ENCODE measurements at regions of chr9 and their contacts with region 1.

Region 1: GRCh38 chr9:15354713-15355112 is 47.7 kb upstream of the TTC39B start:
- DNase-seq: peak; percentile 24
- ATAC-seq: peak; percentile 48
- H3K4me3 Mint-ChIP-seq: no peak overlapping the region
- H3K27ac Mint-ChIP-seq: peak overlapping the region; percentile 55
- H3K4me1 Mint-ChIP-seq: peaks cover 30% of the 10 kb centered on the region
- H3K27me3 Mint-ChIP-seq: no peaks in the 10 kb centered on the region

Region 2: GRCh38 chr9:15370466-15371447 is 16.0 kb after region 1 on chr9:
- CTCF ChIA-PET with region 1: interaction called, 10 read pairs
- POLR2A ChIA-PET with region 1: no interaction called
- DNase-seq: no peak
- ATAC-seq: no peak
- H3K4me3 Mint-ChIP-seq: no peak overlapping the region
- H3K27ac Mint-ChIP-seq: no peak overlapping the region
- H3K4me1 Mint-ChIP-seq: peaks cover 5% of the 10 kb centered on the region
- H3K27me3 Mint-ChIP-seq: peaks cover 2% of the 10 kb centered on the region

Region 3: DNA sequence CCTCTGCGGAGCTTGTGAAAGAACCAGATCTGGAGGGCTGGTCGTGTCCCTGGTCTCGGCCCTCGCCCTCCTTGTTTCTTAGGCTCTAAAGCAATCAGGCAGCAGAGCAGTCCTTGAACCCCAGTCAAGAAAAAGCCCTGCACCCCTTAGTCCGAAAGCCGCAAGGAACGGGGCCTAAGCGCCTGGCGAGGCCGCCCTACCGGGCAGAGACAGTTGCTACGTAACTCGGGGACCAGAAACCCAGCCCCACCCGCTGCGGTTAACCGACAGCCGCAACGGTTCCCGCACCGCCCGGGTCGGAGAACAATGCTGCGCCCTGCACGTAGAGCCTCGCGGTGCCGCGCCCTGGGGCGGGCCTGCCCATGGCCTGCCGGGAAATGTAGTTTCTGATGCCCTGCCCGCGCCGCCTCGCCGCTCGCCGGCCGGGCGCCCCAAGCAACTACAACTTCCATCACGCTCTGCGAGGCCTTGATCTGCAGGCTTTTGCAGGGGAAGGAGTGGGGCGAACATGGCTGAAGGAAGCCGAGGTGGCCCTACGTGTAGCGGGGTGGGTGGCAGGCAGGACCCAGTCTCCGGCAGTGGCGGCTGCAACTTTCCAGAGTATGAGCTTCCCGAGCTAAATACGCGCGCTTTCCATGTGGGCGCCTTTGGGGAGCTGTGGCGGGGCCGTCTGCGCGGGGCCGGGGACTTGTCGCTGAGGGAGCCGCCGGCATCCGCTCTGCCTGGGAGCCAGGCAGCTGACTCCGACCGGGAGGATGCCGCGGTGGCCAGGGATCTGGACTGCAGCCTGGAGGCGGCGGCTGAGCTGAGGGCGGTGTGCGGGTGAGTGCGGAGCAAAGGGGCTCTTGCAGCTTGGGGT is 67.9 kb after region 1 on chr9 and contains the start of gene SNAPC3:
- CTCF ChIA-PET with region 1: interaction called, 11 read pairs
- POLR2A ChIA-PET with region 1: no interaction called
- DNase-seq: peak; percentile 95
- ATAC-seq: peak; percentile 96
- H3K4me3 Mint-ChIP-seq: peak within 1 kb of the TSS; percentile 93
- H3K27ac Mint-ChIP-seq: peak within 1 kb of the TSS; percentile 86
- H3K4me1 Mint-ChIP-seq: peaks cover 32% of the 10 kb centered on the region
- H3K27me3 Mint-ChIP-seq: peaks cover 24% of the 10 kb centered on the region
- total RNA-seq, gene SNAPC3: 21.7 to 22.6 TPM